ENCODE measurements at regions of chr10 and their contacts with region 1.

Region 1: DNA sequence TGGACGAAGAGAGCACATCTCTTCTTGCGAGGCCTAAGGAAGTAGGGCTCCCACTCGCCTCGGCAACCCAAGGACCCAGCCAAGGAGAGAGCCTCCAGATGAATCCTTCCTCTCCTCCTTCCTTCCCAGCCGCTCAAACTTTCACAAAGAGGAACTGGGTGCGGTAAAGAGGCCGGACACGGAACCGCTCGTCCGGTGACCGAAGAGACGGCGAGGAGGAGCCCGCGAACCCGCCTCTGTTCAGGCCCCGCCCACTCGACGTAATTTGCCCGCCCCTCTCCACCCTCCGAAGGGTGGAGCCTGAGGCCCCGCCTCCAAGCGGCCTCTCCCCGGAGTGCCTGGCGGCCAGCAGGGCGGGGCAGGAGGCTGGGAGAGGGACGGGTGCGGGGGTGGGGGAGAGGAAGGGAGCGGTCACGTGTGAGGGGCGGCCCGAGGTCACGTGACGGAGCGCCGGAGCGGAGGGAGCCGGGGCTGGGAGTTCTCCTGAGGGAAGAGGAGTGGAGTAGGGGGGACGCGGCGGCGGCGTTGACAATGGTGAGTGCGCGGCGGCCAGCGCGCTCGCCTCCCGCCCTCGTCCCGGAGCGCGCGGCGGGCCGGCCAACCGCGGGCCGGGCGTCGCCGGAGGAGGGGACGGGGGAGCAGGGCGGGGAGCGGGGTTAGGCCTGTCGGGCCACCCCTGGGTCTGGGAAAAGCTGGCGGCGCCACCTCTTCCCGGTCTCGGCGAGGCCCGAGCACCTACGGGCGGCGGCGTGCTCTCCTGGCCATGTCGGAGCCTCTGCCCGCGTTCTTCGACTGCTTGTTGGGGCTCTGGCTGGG is at the start of gene VPS26A:
- DNase-seq: peak; percentile 99
- H3K4me3 ChIP-seq: peak within 1 kb of the TSS; percentile 83 to 92
- H3K27ac ChIP-seq: peak within 1 kb of the TSS; percentile 93 to 98
- H3K4me1 ChIP-seq: no peaks in the 10 kb centered on the region
- H3K27me3 ChIP-seq: no peaks in the 10 kb centered on the region
- CTCF ChIP-seq: peak in 2 of 4 experiments; percentile 41 to 42
- POLR2A ChIP-seq: peak; percentile 96
- total RNA-seq, gene VPS26A: 28.5 to 38.0 TPM

Region 2: DNA sequence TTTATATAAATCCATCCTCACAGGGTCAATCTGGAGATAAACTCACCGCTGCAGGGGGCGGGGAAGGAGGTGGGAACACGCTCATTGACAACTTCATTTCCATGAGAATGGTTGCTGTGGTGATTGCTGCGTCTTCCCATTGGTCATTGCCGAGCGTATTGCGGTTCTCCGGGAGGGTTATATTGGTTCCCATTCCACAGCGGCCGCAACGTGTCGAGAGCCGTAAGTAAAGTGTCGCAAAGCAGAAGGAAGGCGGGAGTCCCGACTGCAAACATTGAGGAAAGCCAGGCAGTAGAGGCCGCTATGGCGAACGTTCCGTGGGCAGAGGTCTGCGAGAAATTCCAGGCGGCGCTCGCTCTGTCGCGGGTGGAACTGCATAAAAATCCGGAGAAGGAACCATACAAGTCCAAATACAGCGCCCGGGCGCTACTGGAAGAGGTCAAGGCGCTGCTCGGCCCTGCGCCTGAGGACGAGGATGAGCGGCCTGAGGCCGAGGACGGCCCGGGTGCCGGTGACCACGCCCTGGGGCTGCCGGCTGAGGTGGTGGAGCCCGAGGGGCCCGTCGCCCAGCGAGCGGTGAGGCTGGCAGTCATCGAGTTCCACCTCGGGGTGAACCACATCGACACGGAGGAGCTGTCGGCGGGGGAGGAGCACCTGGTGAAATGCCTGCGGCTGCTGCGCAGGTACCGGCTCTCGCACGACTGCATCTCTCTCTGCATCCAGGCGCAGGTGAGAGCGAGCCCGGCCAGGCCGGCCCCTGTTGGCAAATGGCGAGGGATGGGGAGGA is 135.2 kb before region 1 on chr10 and contains the start of gene KIFBP:
- intact Hi-C with region 1: loop called (anchors 2 kb)
- DNase-seq: peak; percentile 96
- H3K4me3 ChIP-seq: peak within 1 kb of the TSS; percentile 68 to 80
- H3K27ac ChIP-seq: peak within 1 kb of the TSS; percentile 81 to 83
- H3K4me1 ChIP-seq: peaks cover 4% of the 10 kb centered on the region
- H3K27me3 ChIP-seq: no peaks in the 10 kb centered on the region
- CTCF ChIP-seq: peak; percentile 11 to 54 (median 44)
- POLR2A ChIP-seq: peak; percentile 89
- total RNA-seq, gene KIFBP: 37.3 to 46.7 TPM

Region 3: DNA sequence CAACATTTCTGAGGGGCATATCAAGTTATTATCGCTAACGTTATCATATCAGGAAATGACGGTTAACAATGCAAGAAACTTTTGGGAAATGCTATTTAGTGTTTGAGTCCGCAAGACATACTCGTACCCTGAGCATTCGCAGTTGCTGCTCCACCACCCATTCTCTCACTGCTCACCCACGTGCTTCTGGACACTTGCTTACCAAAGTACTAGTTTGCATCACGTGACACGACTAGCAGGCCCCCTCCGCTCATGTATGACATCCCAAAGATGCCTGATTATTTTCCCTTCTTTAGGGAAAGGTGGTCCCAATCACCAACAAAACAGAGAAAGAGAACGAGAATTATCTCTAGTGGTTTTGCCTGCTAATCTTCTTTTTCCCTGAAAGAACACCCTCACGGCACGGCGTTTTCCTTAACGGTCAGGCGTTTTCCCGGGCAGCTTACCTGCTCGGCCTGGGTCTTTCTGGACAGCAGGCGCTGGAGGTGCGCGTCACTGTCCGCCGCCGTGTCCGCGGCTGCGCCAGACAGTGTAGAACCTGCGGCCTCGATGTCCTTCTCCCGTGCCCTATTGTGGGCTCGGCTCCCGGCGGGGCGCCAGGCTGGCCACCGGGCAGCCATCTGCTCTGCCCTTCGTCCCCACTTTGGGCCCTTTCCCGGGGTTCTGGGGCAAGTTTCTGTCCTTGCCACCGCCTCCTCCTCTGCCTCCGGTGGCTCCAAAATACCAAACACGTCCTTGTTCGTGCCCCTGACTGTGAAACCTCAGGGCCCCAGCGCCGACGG is 56.0 kb after region 1 on chr10 and contains the start of gene SUPV3L1:
- intact Hi-C with region 1: loop called (anchors 5 kb)
- DNase-seq: peak; percentile 94
- H3K4me3 ChIP-seq: peak within 1 kb of the TSS; percentile 92 to 97
- H3K27ac ChIP-seq: peak within 1 kb of the TSS; percentile 93 to 95
- H3K4me1 ChIP-seq: peaks cover 8% of the 10 kb centered on the region
- H3K27me3 ChIP-seq: no peaks in the 10 kb centered on the region
- CTCF ChIP-seq: peak in 2 of 4 experiments; percentile 1 to 28
- POLR2A ChIP-seq: no peak
- total RNA-seq, gene SUPV3L1: 18.5 to 37.0 TPM